HCT116 (cell line): ENCODE measurements at regions of chr2 and their contacts with region 1.

Region 1: GRCh38 chr2:235106874-235107639 is 155.2 kb downstream of the SH3BP4 start:
- DNase-seq: peak; percentile 56
- ATAC-seq: peak; percentile 98
- H3K4me3 ChIP-seq: no peak overlapping the region
- H3K27ac ChIP-seq: no peak overlapping the region
- H3K4me1 ChIP-seq: 0 out of 4 replicates have a peak, but pooled peaks cover 0 to 3% of the 10 kb centered on the region in 2 experiments
- H3K27me3 ChIP-seq: no peaks in the 10 kb centered on the region
- CTCF ChIP-seq: peak; percentile 70 to 87 (median 80)
- POLR2A ChIP-seq: no peak
- RAD21 ChIP-seq: peak; percentile 97

Region 2: GRCh38 chr2:234544659-234545611 is 562.1 kb before region 1 on chr2:
- CTCF ChIA-PET with region 1: interaction called, 11 read pairs
- POLR2A ChIA-PET with region 1: no interaction called
- RAD21 ChIA-PET with region 1: interaction called, 3 to 4 read pairs
- intact Hi-C with region 1: loop called (anchors 1 kb)
- DNase-seq: peak; percentile 38
- ATAC-seq: peak; percentile 96
- H3K4me3 ChIP-seq: no peak overlapping the region
- H3K27ac ChIP-seq: no peak overlapping the region
- H3K4me1 ChIP-seq: peaks cover 3 to 8% of the 10 kb centered on the region in 2 experiments; a peak in 2 of 4 replicates
- H3K27me3 ChIP-seq: no peaks in the 10 kb centered on the region
- CTCF ChIP-seq: peak; percentile 84 to 85 (median 85)
- POLR2A ChIP-seq: no peak
- RAD21 ChIP-seq: peak; percentile 90

Region 3: GRCh38 chr2:234550511-234551107 is 556.4 kb before region 1 on chr2:
- CTCF ChIA-PET with region 1: interaction called, 19 read pairs
- POLR2A ChIA-PET with region 1: no interaction called
- RAD21 ChIA-PET with region 1: interaction called, 3 to 4 read pairs
- intact Hi-C with region 1: loop called (anchors 1 kb)
- DNase-seq: peak; percentile 66
- ATAC-seq: peak; percentile 96
- H3K4me3 ChIP-seq: no peak overlapping the region
- H3K27ac ChIP-seq: no peak overlapping the region
- H3K4me1 ChIP-seq: peaks cover 0 to 10% of the 10 kb centered on the region in 2 experiments; a peak in 1 of 4 replicates
- H3K27me3 ChIP-seq: no peaks in the 10 kb centered on the region
- CTCF ChIP-seq: peak; percentile 88 to 94 (median 90)
- POLR2A ChIP-seq: no peak
- RAD21 ChIP-seq: peak; percentile 99

Region 4: GRCh38 chr2:234564699-234565098 is 542.4 kb before region 1 on chr2:
- CTCF ChIA-PET with region 1: interaction called, 20 read pairs
- POLR2A ChIA-PET with region 1: no interaction called
- RAD21 ChIA-PET with region 1: no interaction called
- intact Hi-C with region 1: no loop called
- DNase-seq: no peak
- ATAC-seq: no peak
- H3K4me3 ChIP-seq: no peak overlapping the region
- H3K27ac ChIP-seq: no peak overlapping the region
- H3K4me1 ChIP-seq: no peaks in the 10 kb centered on the region
- H3K27me3 ChIP-seq: no peaks in the 10 kb centered on the region
- CTCF ChIP-seq: peak in 2 of 3 experiments; percentile 11 to 40; a peak in 1 of 6 replicates
- POLR2A ChIP-seq: no peak
- RAD21 ChIP-seq: peak; percentile 73

Region 5: DNA sequence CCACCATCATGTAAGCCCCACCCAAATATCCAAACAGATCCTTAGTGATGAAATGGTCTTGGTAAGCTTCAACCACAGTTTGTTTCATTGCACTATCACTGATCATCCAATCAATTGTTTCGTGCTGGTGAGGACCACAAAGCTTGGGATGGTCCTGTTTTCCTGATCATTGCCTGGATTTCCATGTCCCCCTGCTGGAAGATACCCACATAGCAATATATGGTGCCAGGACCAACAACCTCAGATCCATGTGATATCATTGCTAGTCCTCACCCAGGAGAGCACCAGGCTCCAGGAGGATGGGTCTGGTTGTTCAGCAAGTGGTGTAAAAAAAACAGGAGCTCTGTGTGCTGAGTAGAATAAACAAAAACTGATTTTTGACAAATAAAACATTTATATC is 361.7 kb before region 1 on chr2:
- CTCF ChIA-PET with region 1: no interaction called
- POLR2A ChIA-PET with region 1: no interaction called
- RAD21 ChIA-PET with region 1: no interaction called
- intact Hi-C with region 1: loop called (anchors 10 kb)
- DNase-seq: no peak
- ATAC-seq: peak; percentile 58
- H3K4me3 ChIP-seq: no peak overlapping the region
- H3K27ac ChIP-seq: no peak overlapping the region
- H3K4me1 ChIP-seq: no peaks in the 10 kb centered on the region
- H3K27me3 ChIP-seq: no peaks in the 10 kb centered on the region
- CTCF ChIP-seq: peak in 2 of 3 experiments; percentile 45 to 48; a peak in 4 of 6 replicates
- POLR2A ChIP-seq: no peak
- RAD21 ChIP-seq: peak; percentile 42

Region 6: GRCh38 chr2:234881413-234882241 is 225.4 kb before region 1 on chr2:
- CTCF ChIA-PET with region 1: interaction called, 13 read pairs
- POLR2A ChIA-PET with region 1: no interaction called
- RAD21 ChIA-PET with region 1: interaction called, 3 to 6 read pairs
- intact Hi-C with region 1: loop called (anchors 5 kb)
- DNase-seq: peak; percentile 94
- ATAC-seq: peak; percentile 87
- H3K4me3 ChIP-seq: peak overlapping the region; percentile 52
- H3K27ac ChIP-seq: peak overlapping the region; percentile 63
- H3K4me1 ChIP-seq: peaks cover 30 to 37% of the 10 kb centered on the region in 2 experiments
- H3K27me3 ChIP-seq: no peaks in the 10 kb centered on the region
- CTCF ChIP-seq: peak; percentile 75 to 97 (median 95); a peak in 5 of 6 replicates
- POLR2A ChIP-seq: no peak
- RAD21 ChIP-seq: peak; percentile 84

Region 7: DNA sequence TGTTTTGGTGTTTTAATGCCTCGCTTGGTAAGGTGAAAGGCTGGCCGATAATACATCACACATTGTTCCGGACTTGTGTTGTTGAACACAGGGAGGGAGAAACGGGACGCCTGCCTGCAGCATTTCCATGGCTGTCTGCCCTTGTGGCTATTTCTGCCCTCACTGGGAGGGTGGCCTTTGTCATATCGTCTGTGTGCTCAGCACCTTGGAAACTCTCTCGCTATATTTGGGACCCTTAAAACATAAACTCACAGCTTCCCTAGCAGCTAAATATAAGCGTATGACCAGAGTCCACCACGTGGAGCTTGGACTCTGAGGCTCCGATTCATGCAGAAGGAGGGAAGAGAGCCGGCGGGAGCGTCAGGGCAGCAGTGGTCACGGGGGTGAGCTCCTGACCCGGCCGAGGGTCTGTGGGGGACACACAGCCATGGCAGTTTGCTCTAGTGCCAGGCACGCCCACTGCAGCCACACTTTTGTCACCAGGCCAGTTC is 43.5 kb before region 1 on chr2:
- CTCF ChIA-PET with region 1: no interaction called
- POLR2A ChIA-PET with region 1: no interaction called
- RAD21 ChIA-PET with region 1: no interaction called
- intact Hi-C with region 1: no loop called
- DNase-seq: no peak
- ATAC-seq: no peak
- H3K4me3 ChIP-seq: no peak overlapping the region
- H3K27ac ChIP-seq: no peak overlapping the region
- H3K4me1 ChIP-seq: no peaks in the 10 kb centered on the region
- H3K27me3 ChIP-seq: no peaks in the 10 kb centered on the region
- CTCF ChIP-seq: no peak
- POLR2A ChIP-seq: no peak
- RAD21 ChIP-seq: no peak